Head of caudate nucleus (tissue), 42 donors: ENCODE measurements at regions of chr2 and their contacts with region 1.

Region 1: GRCh38 chr2:2613279-2614199 is 282.5 kb upstream of the MYT1L start:
- DNase-seq: peak; percentile 94 to 99 (median 97)

Region 2: DNA sequence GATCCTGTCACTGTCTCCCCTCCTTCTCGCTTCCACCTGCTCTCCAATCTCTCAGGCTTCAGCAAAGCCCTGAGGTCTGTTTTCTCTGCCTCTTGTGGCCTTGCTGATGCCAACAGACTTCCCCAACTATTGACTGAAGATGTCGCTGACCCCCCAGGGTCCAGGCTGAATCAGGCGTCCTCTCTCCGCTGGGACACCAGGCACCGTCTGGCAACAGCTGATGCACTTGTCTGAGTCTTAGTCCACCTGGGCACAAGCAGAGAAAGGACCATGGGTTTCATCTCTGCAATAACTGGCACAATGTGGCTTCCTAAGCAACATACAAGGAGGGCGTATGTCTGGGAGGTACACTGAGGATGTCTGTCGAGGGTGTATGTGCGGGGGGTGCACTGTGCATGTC is 33.7 kb before region 1 on chr2:
- intact Hi-C with region 1: loop called (anchors 2 kb)
- DNase-seq: peak in 3 of 42 donors; percentile 11 to 33 (median 29)